Activated CD4-positive, alpha-beta T cell treated with anti-CD3 and anti-CD28 coated beads for 36 hours (primary cell): ENCODE measurements at regions of chr3 and their contacts with region 1.

Region 1: GRCh38 chr3:143831208-143831607 is 17.1 kb downstream of the SLC9A9 start:
- DNase-seq: no peak
- ATAC-seq: peak; percentile 44
- H3K4me3 Mint-ChIP-seq: no peak overlapping the region
- H3K27ac Mint-ChIP-seq: no peak overlapping the region
- H3K4me1 Mint-ChIP-seq: peaks cover 48% of the 10 kb centered on the region
- H3K27me3 Mint-ChIP-seq: no peaks in the 10 kb centered on the region

Region 2: DNA sequence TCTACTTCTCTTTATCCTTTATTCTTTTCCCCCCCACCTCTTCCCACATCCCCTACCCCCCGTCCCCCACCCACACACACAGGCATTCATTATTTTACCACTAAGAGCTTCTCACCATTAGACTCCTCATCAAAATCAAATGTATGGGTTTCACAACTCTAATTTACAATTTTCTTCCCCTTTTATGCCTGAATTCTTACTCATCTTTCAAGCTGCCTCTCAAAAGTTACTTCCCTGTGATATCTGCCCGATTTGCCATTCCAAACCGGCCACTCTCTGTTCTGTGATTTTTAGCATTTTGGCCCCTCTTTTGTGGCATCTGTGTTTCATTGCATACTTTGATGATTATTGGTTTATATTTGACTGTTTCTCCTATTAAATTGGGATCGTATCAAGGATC is 25.2 kb before region 1 on chr3:
- CTCF ChIA-PET with region 1: no interaction called
- POLR2A ChIA-PET with region 1: no interaction called
- intact Hi-C with region 1: no loop called
- DNase-seq: no peak
- ATAC-seq: no peak
- H3K4me3 Mint-ChIP-seq: no peak overlapping the region
- H3K27ac Mint-ChIP-seq: no peak overlapping the region
- H3K4me1 Mint-ChIP-seq: peaks cover 4% of the 10 kb centered on the region
- H3K27me3 Mint-ChIP-seq: no peaks in the 10 kb centered on the region

Region 3: GRCh38 chr3:143847787-143848631 is 16.8 kb after region 1 on chr3 and contains the start of gene SLC9A9:
- CTCF ChIA-PET with region 1: no interaction called
- POLR2A ChIA-PET with region 1: no interaction called
- intact Hi-C with region 1: loop called (anchors 1 to 2 kb)
- DNase-seq: peak; percentile 60
- ATAC-seq: peak; percentile 93
- H3K4me3 Mint-ChIP-seq: peak within 1 kb of the TSS; percentile 80
- H3K27ac Mint-ChIP-seq: peak within 1 kb of the TSS; percentile 87
- H3K4me1 Mint-ChIP-seq: peaks cover 47% of the 10 kb centered on the region
- H3K27me3 Mint-ChIP-seq: no peaks in the 10 kb centered on the region
- total RNA-seq, gene SLC9A9: 1.4 to 1.6 TPM